ENCODE measurements at regions of chr22 and their contacts with region 1.

Region 1: GRCh38 chr22:25172153-25172552 is 27.5 kb upstream of the CRYBB3 start:
- DNase-seq: peak in 1 of 2 donors; percentile 66
- ATAC-seq: peak; percentile 61 to 69
- H3K4me3 ChIP-seq: no peak overlapping the region
- H3K27ac ChIP-seq: no peak overlapping the region
- H3K4me1 ChIP-seq: no peaks in the 10 kb centered on the region
- H3K27me3 ChIP-seq: no peaks in the 10 kb centered on the region
- CTCF ChIP-seq: peak; percentile 63 to 77 (median 68)
- POLR2A ChIP-seq: no peak

Region 2: DNA sequence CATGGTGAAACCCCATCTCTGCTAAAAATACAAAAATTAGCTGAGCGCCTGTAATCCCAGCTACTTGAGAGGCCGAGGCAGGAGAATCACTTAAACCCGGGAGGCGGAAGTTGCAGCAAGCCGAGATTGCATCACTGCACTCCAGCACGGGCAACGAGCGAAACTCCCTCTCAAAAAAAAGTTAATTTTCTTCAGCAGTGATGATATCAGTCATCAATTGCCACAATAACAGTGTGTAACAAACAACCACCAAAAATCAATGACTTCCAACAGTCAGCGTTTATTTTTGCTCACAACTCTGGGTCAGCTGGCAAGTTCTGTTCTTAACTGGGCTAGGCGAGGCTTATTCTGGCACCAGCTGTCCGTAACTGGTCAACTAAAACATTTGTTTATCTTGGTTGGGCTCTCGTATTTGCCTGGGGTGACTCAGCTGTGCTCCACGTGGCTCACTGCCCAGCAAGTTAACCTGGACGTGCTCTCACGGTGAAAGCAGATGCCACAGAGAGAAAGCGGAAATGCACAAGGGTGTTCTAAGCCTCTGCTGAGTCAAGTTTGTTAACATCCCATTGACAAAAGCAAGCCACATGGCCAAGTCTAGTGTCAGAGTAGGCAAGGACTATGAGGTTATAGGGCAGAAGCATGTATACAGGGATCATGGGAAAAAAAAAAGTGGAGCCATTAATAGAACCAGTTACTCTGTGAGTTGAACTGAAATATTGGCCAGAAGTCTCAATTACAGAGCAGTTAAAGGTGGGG is 277.8 kb before region 1 on chr22:
- in situ Hi-C with region 1: no loop called
- intact Hi-C with region 1: loop called (anchors 10 kb)
- DNase-seq: peak; percentile 87 to 95
- ATAC-seq: peak; percentile 97 to 98
- H3K4me3 ChIP-seq: peak overlapping the region in 3 of 4 donors; percentile 2 to 39 (median 20)
- H3K27ac ChIP-seq: peak overlapping the region; percentile 82 to 88 (median 84)
- H3K4me1 ChIP-seq: peaks cover 13 to 17% of the 10 kb centered on the region in 2 donors
- H3K27me3 ChIP-seq: no peaks in the 10 kb centered on the region
- CTCF ChIP-seq: no peak
- POLR2A ChIP-seq: no peak

Region 3: DNA sequence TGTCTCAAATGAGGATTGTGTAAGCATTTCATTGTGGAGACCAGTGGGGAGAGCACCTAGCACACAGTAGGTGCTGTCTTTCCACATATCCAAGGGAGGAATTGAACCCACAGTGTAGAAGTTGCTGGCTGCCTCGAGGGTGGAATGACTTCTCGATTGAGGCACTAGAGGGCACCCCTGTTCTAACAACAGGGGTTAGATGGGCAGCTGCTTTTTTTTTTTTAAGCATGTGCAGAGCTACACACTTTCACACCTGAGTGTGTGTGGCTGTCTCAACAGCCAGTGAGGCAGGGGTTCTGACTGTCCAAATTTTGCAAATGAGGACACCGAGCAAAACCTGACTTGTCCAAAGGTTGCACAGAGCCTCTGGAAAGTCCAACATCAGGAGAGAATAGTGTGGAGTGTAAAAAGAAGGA is 90.7 kb before region 1 on chr22:
- in situ Hi-C with region 1: no loop called
- intact Hi-C with region 1: loop called (anchors 1 kb)
- DNase-seq: no peak
- ATAC-seq: peak in 1 of 2 donors; percentile 60
- H3K4me3 ChIP-seq: no peak overlapping the region
- H3K27ac ChIP-seq: no peak overlapping the region
- H3K4me1 ChIP-seq: no peaks in the 10 kb centered on the region
- H3K27me3 ChIP-seq: no peaks in the 10 kb centered on the region
- CTCF ChIP-seq: peak in 4 of 5 experiments; percentile 14 to 55 (median 42)
- POLR2A ChIP-seq: no peak

Region 4: DNA sequence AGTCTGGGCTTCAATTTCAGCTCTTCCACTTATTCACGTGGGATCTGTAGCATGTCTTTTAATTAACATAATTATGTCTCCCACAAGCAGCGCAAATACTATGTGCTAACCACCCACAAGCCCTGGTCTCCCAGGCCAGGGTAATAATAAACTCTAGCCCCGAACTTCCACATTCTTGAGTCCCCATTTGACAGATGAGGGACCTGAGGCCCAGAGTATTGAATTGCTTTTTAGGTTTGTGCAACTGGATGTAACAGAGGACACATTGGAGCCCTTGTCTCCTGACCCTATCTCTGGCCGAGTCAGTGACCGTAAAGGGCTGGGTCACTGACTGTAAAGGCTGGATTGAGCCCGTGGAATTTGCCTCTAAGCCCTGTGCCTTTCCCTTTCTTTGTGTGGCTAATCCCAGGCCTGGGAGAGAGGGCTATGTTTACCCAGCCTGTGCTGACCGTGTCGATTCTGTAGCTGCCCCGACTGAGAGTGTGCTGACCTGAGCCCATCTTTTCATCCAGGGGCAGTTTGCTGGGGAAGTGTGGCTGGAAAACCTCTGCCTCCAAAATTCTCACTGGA is 51.2 kb after region 1 on chr22:
- in situ Hi-C with region 1: no loop called
- intact Hi-C with region 1: no loop called
- DNase-seq: no peak
- ATAC-seq: no peak
- H3K4me3 ChIP-seq: no peak overlapping the region
- H3K27ac ChIP-seq: no peak overlapping the region
- H3K4me1 ChIP-seq: no peaks in the 10 kb centered on the region
- H3K27me3 ChIP-seq: peaks cover 0 to 2% (median 0%) of the 10 kb centered on the region in 3 donors
- CTCF ChIP-seq: no peak
- POLR2A ChIP-seq: no peak

Measured in gastrocnemius medialis (tissue), 4 donors.